MCF 10A (cell line): ENCODE measurements at regions of chr18 and their contacts with region 1.

Region 1: DNA sequence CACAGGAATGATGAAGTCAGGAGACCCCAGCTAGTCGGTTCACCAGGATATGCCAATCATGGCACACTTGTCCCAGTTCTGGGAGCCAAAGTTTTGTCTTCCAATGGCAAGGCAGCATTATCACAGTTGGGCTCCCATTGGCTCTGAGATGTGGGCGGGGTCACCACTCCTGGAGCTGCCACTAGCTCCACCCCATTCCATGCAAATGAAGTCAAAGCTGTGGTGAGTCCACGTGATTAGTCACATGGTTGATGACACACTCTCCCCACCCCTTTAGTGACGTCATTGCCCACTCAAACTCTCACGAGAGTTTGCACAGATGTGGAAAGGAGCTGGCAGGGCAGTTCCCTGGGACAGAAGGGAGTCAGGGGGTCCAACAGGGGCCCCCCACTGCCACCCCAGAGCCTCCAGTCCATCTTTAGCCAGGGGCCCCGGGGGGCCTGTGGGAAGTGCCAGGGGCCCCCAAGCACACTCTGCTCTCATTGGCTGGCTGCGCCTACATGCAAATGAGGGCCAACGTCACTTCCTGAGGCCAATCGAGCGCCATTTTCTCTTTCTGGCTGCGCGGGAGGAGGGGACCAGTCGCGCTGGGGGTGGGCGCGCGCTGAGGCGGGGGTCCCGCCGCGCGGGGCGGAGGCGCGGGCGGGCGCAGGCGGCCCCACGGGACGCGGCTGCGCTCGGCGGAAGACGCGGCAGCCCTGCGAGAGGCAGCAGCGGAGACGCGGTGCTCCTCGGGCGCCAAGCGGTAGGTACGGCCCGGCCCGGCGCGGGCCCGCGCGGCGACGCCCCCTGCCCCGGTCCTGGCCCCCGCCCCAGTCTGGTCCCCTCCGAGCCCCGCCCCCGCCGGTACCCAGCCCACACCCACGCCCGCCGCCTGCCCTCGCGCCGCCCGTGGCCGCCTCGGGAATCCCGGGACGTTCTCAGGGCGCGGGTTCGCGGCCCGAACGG is at the start of gene ADNP2:
- DNase-seq: peak; percentile 98
- H3K4me3 Mint-ChIP-seq: peak within 1 kb of the TSS; percentile 70
- H3K27ac Mint-ChIP-seq: peak within 1 kb of the TSS; percentile 86
- H3K4me1 Mint-ChIP-seq: peaks cover 14% of the 10 kb centered on the region
- H3K27me3 Mint-ChIP-seq: no peaks in the 10 kb centered on the region
- CTCF ChIP-seq: no peak
- total RNA-seq, gene ADNP2: 19.6 and 21.1 TPM in 2 replicates

Region 2: DNA sequence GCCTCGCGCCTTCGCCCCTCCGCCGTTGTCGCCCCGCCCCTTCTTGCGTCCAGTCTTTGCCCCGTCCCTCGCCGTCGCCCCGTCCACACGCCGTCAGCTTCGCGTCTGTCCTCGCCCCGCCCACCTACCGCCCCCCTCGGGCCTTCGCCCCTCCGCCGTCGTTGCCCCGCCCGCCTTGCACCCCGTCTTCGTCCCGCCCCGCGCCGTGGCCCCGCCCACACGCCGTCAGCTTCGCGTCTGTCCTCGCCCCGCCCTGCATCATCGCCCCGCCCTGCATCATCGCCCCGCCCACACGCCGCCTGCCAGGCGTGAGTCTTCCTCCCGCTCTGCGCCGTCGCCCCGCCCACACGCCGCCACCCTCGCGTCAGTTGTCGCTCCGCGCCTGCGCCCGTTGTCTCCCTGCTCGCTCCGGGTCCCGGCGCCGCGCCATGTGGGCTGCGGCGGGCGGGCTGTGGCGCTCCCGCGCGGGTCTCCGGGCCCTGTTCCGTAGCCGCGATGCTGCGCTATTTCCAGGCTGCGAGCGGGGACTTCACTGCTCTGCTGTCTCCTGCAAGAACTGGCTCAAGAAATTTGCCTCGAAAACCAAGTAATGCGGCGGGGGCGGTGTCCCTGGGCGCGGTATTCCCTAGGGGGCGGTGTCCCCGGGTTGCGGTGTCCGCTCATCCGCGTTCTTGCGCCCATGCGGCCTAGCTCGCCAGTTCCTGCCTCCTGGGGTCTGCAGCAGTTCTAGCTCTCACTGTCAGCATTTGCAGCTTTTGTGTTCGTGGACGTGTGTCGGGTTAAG is 74.7 kb before region 1 on chr18 and contains the start of gene RBFA:
- CTCF ChIA-PET with region 1: interaction called, 4 read pairs
- POLR2A ChIA-PET with region 1: interaction called, 26 read pairs
- intact Hi-C with region 1: loop called (anchors 5 kb)
- DNase-seq: peak; percentile 96
- H3K4me3 Mint-ChIP-seq: peak within 1 kb of the TSS; percentile 92
- H3K27ac Mint-ChIP-seq: peak within 1 kb of the TSS; percentile 100
- H3K4me1 Mint-ChIP-seq: peaks cover 23% of the 10 kb centered on the region
- H3K27me3 Mint-ChIP-seq: no peaks in the 10 kb centered on the region
- CTCF ChIP-seq: peak; percentile 49
- total RNA-seq, gene RBFA: 38.2 and 47.4 TPM in 2 replicates

Region 3: GRCh38 chr18:80132180-80132812 is 23.3 kb after region 1 on chr18:
- CTCF ChIA-PET with region 1: interaction called, 5 read pairs
- POLR2A ChIA-PET with region 1: interaction called, 21 read pairs
- intact Hi-C with region 1: no loop called
- DNase-seq: peak; percentile 16
- H3K4me3 Mint-ChIP-seq: peak overlapping the region; percentile 58
- H3K27ac Mint-ChIP-seq: peak overlapping the region; percentile 85
- H3K4me1 Mint-ChIP-seq: peaks cover 24% of the 10 kb centered on the region
- H3K27me3 Mint-ChIP-seq: no peaks in the 10 kb centered on the region
- CTCF ChIP-seq: no peak

Region 4: GRCh38 chr18:80147418-80148325 is 38.7 kb after region 1 on chr18:
- CTCF ChIA-PET with region 1: no interaction called
- POLR2A ChIA-PET with region 1: interaction called, 23 read pairs
- intact Hi-C with region 1: no loop called
- DNase-seq: peak; percentile 79
- H3K4me3 Mint-ChIP-seq: peak overlapping the region; percentile 73
- H3K27ac Mint-ChIP-seq: peak overlapping the region; percentile 76
- H3K4me1 Mint-ChIP-seq: no peaks in the 10 kb centered on the region
- H3K27me3 Mint-ChIP-seq: no peaks in the 10 kb centered on the region
- CTCF ChIP-seq: no peak